Right cardiac atrium (tissue), 5 donors: ENCODE measurements at regions of chr9 and their contacts with region 1.

Region 1: GRCh38 chr9:115591584-115591984 is 473.6 kb upstream of the TNC start:
- DNase-seq: peak; percentile 58 to 68 (median 67)
- ATAC-seq: peak; percentile 87 to 94
- H3K4me3 ChIP-seq: no peak overlapping the region
- H3K27ac ChIP-seq: no peak overlapping the region
- H3K4me1 ChIP-seq: peaks cover 2% of the 10 kb centered on the region
- H3K27me3 ChIP-seq: no peaks in the 10 kb centered on the region

Region 2: DNA sequence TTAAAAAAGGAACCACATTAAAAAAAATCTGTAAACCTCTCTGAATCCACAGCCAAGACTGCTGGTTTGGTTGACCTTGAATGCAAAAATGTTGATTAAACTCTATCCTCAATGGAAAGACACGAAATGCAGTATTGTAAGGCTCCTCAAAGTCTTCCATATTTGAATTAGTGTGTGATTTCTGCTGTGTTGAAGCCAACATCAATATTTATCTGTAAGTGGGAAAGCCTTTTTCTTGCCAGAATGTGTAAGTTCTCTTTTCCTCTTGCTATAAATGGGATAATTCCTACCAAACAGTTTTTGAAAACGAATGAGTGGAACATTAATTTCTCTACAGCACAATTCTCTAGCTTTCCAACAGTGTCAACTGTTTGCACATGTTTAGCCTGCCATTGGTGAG is 51.5 kb before region 1 on chr9:
- intact Hi-C with region 1: no loop called
- DNase-seq: no peak
- ATAC-seq: no peak
- H3K4me3 ChIP-seq: no peak overlapping the region
- H3K27ac ChIP-seq: no peak overlapping the region
- H3K4me1 ChIP-seq: no peaks in the 10 kb centered on the region
- H3K27me3 ChIP-seq: no peaks in the 10 kb centered on the region

Region 3: DNA sequence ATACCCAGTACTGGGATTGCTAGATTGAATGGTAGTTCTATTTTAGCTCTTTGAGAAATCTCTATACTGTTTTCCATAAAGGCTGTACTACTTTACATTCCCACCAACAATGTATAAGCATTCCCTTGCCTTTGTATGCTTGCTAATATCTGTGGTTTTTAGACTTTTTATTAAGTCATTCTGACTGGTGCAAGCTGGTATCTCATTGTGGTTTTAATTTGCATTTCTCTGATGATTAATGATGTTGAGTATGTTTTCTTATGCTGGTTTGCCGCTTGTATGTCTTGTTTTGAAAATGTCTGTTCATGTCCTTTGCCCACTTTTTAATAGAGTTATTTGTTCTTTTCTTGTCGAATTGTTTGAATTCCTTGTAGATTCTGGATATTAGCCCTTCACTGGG is 49.3 kb after region 1 on chr9:
- intact Hi-C with region 1: no loop called
- DNase-seq: no peak
- ATAC-seq: no peak
- H3K4me3 ChIP-seq: no peak overlapping the region
- H3K27ac ChIP-seq: no peak overlapping the region
- H3K4me1 ChIP-seq: no peaks in the 10 kb centered on the region
- H3K27me3 ChIP-seq: no peaks in the 10 kb centered on the region

Region 4: GRCh38 chr9:116238225-116238624 is 646.6 kb after region 1 on chr9:
- intact Hi-C with region 1: loop called in 1 of 4 experiments (anchors 5 kb)
- DNase-seq: no peak
- ATAC-seq: no peak
- H3K4me3 ChIP-seq: no peak overlapping the region
- H3K27ac ChIP-seq: no peak overlapping the region
- H3K4me1 ChIP-seq: no peaks in the 10 kb centered on the region
- H3K27me3 ChIP-seq: no peaks in the 10 kb centered on the region

Region 5: GRCh38 chr9:116572095-116572748 is 980.6 kb after region 1 on chr9:
- intact Hi-C with region 1: loop called in 2 of 4 experiments (anchors 5 to 10 kb)
- DNase-seq: peak; percentile 94 to 98 (median 97)
- ATAC-seq: peak; percentile 97
- H3K4me3 ChIP-seq: no peak overlapping the region
- H3K27ac ChIP-seq: no peak overlapping the region
- H3K4me1 ChIP-seq: peaks cover 5% of the 10 kb centered on the region
- H3K27me3 ChIP-seq: no peaks in the 10 kb centered on the region

Region 6: DNA sequence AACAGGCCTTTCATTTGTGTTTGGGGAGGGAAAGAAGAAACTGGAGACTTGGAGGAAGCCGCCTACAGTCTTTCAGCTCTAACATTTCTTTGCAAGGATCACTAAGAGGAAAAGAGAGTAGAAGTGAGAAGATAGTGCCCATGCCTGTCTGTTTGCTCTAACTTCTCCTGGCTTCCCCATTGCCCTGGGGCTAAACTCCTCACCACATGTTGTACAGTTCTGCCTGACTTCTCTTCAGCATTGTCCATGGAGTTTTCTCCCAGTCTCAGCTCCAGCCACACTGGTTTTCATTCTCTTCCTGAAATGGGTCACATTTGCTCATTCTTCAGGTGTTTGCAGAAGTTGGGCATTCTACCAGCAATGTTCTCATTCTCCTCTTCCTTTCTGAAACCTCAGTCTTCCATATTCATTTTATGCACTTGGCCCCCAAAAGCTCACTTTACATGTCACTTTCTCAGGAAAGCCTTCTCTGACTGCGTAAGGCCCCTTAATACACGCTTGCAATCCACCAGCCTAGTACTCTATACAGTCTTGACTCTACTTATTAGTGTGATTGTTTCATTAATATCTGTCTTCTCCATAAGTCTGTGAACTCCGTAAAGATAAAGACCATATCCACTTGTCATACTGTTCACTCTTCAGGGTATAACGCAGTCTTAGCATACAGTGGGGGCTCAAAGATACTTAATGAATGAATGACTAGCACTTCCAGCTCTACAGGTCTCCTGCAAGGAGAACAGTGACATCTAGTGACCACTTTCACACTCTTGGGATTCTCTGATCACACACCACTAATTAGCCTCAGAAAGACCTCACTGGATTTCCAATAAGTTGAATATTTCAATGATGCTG is 1055.3 kb after region 1 on chr9:
- intact Hi-C with region 1: loop called (anchors 5 to 10 kb)
- DNase-seq: no peak
- ATAC-seq: peak; percentile 77 to 85
- H3K4me3 ChIP-seq: no peak overlapping the region
- H3K27ac ChIP-seq: peak overlapping the region; percentile 42
- H3K4me1 ChIP-seq: peaks cover 2% of the 10 kb centered on the region
- H3K27me3 ChIP-seq: no peaks in the 10 kb centered on the region

Region 7: GRCh38 chr9:116661037-116661954 is 1069.7 kb after region 1 on chr9:
- intact Hi-C with region 1: loop called in 2 of 4 experiments (anchors 10 kb)
- DNase-seq: no peak
- ATAC-seq: peak; percentile 81 to 84
- H3K4me3 ChIP-seq: no peak overlapping the region
- H3K27ac ChIP-seq: no peak overlapping the region
- H3K4me1 ChIP-seq: peaks cover 3% of the 10 kb centered on the region
- H3K27me3 ChIP-seq: no peaks in the 10 kb centered on the region